GM12878 (cell line): ENCODE measurements at regions of chrX and their contacts with region 1.

Region 1: DNA sequence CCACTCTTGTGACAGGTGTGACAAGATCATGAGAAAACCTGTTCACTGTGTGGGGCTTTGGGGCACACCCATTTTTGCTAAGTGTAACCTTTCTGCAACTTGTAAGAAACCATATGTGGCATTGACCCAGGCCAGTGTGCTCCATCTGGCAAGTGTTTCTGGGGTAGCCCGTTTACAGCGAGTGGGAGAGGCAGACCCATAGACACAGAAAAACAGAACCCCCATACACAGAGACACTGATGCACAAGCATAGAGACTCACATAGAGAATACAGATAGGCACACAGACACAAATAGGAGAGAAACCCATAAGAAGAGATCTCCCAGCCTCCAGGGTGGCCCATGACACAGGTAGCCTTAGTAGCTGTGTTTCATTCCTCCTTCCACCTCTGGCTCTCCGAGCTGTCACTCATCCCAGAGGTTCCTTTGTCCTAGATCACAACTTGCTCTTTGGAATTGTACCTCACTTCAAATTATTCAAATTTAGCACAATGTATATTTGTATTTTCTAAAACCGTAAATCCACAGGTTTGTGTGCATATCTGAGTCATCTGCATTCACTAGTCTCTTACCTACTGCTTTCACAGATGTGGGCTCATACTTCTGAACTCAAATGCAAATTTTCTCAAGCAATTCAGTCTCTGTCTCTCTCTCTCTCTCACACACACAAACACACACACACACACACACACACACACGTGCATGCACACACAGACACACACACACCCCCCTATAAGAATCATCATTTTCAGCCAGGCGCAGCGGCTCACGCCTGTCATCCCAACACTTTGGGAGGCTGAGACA is 114.4 kb downstream of the SH3KBP1 start:
- DNase-seq: no peak
- ATAC-seq: peak; percentile 64
- H3K4me3 ChIP-seq: peak overlapping the region; percentile 2; the same call in 1 of the 2 replicates
- H3K27ac ChIP-seq: peak overlapping the region; percentile 90
- H3K4me1 ChIP-seq: peaks cover 61% of the 10 kb centered on the region
- H3K27me3 ChIP-seq: no peaks in the 10 kb centered on the region
- CTCF ChIP-seq: no peak
- EP300 ChIP-seq: peak in 1 of 2 experiments; percentile 24; a peak in 1 of 4 replicates
- POLR2A ChIP-seq: no peak
- RAD21 ChIP-seq: no peak

Region 2: GRCh38 chrX:19739683-19740082 is 33.3 kb before region 1 on chrX:
- CTCF ChIA-PET with region 1: interaction called, 12 read pairs
- POLR2A ChIA-PET with region 1: interaction called, 14 read pairs
- RAD21 ChIA-PET with region 1: interaction called, 80 read pairs
- SMC1A ChIA-PET with region 1: interaction called, 624 read pairs
- in situ Hi-C with region 1: no loop called
- intact Hi-C with region 1: no loop called
- DNase-seq: no peak
- ATAC-seq: peak; percentile 18; the same call in 2 of the 3 replicates
- H3K4me3 ChIP-seq: no peak overlapping the region
- H3K27ac ChIP-seq: no peak overlapping the region
- H3K4me1 ChIP-seq: peaks cover 28% of the 10 kb centered on the region
- H3K27me3 ChIP-seq: no peaks in the 10 kb centered on the region
- CTCF ChIP-seq: peak; percentile 56 to 72 (median 71)
- EP300 ChIP-seq: no peak
- POLR2A ChIP-seq: no peak
- RAD21 ChIP-seq: peak; percentile 73

Region 3: DNA sequence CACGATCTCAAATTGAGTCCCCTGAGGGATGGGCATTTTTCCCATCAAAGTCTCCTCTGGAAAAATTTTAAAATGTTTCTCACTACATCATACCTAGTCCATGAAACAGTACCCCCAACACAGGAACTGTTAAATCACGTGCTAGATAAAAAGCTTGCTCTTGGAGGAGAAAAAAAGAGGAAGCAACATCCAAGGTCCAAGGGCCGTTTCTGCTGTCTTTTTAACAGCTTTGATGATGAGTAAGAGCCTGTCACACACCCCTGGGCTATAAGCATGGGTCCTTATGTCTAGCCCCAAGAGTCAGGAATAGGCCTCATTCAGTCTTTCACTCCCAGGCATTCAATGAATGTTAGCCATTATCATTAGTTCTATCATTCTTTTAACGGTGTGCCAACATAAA is 14.5 kb before region 1 on chrX:
- CTCF ChIA-PET with region 1: interaction called, 9 read pairs
- POLR2A ChIA-PET with region 1: interaction called, 10 read pairs
- RAD21 ChIA-PET with region 1: interaction called, 45 read pairs
- SMC1A ChIA-PET with region 1: interaction called, 98 read pairs
- in situ Hi-C with region 1: no loop called
- intact Hi-C with region 1: no loop called
- DNase-seq: no peak
- ATAC-seq: peak; percentile 69
- H3K4me3 ChIP-seq: no peak overlapping the region
- H3K27ac ChIP-seq: peak overlapping the region; percentile 13; the same call in 1 of the 2 replicates
- H3K4me1 ChIP-seq: peaks cover 46% of the 10 kb centered on the region
- H3K27me3 ChIP-seq: no peaks in the 10 kb centered on the region
- CTCF ChIP-seq: no peak
- EP300 ChIP-seq: no peak
- POLR2A ChIP-seq: no peak
- RAD21 ChIP-seq: no peak

Region 4: DNA sequence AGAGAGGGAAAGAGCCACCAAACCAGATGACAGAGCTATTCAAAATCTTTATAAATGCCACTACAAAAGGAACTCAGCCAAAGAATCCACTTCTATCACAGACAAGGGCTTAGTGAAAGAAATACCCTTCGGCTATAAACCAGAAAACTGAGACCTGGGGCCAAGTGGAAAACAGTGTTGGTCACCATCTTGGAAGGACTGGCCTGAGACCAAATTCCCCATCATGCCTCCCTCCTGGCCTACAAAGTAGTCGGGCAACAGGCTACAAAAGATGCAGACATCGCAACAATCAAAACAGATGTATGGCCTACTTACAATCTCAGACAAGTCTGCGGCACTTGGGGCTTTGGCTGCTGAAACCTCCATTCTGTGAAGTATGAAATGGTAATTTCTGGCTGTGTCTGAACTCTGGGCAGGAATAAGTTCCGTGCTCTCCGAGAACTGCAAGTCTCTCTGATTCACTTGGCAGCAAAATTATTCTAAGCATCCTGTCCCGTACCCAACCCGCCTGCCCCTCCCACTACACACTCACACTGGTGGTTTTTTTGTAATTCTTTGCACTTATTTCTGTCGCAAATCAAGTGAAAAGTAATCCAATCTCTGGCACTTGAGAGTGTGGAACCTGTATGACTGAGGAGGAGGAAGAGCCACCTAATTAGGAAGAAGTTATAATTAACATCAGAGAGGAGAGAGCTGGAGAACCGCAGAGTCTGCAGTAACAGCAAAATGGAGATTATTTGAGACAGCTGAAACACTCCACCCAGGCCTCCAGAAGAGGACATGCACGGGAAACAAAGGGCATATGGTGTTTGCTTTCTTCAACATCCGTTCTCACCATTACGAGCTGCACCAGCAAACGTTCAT is 26.5 kb after region 1 on chrX:
- CTCF ChIA-PET with region 1: interaction called, 3 read pairs
- POLR2A ChIA-PET with region 1: interaction called, 6 read pairs
- RAD21 ChIA-PET with region 1: interaction called, 13 read pairs
- SMC1A ChIA-PET with region 1: interaction called, 83 read pairs
- in situ Hi-C with region 1: no loop called
- intact Hi-C with region 1: no loop called
- DNase-seq: no peak
- ATAC-seq: no peak
- H3K4me3 ChIP-seq: peak overlapping the region; percentile 8; the same call in 1 of the 2 replicates
- H3K27ac ChIP-seq: peak overlapping the region; percentile 73
- H3K4me1 ChIP-seq: peaks cover 19% of the 10 kb centered on the region
- H3K27me3 ChIP-seq: no peaks in the 10 kb centered on the region
- CTCF ChIP-seq: no peak
- EP300 ChIP-seq: no peak
- POLR2A ChIP-seq: no peak
- RAD21 ChIP-seq: no peak

Region 5: DNA sequence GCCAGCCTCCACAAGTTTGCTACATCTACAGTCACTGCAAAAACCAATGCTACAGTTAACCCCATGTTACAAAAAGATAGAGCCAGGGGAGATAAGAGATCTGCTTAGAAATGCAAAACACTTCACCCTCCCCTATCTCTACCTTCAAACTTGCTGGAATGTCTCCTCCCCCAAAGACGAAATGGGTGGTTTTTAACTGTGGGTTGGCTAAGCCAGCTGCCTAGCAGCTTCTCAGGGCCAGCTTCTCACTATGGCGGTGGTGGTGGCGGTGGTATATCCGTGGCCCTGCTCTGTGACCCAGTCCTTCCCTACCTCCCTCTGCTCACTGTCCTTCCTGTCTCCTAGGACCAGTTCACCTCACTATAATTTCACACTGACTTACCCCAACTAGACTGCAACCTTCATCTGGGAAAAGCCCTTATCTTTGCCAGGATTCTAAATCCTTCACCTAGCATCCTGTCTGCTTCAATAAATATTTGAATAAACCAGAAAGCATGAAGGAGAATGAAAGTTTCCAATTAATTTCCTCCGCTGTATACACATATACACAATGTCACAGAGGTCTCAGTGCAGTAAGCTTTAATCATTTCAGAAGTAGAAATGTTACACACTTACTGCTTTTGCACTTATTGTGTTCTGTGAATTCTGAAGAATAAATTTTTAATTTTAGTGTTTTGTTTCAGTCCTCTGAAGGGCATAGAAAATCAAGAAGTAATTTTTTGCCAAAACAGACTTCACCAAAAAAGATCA is 68.0 kb after region 1 on chrX:
- CTCF ChIA-PET with region 1: interaction called, 4 read pairs
- POLR2A ChIA-PET with region 1: interaction called, 3 read pairs
- RAD21 ChIA-PET with region 1: interaction called, 15 read pairs
- SMC1A ChIA-PET with region 1: interaction called, 20 read pairs
- in situ Hi-C with region 1: no loop called
- intact Hi-C with region 1: no loop called
- DNase-seq: peak; percentile 64
- ATAC-seq: peak; percentile 74
- H3K4me3 ChIP-seq: no peak overlapping the region
- H3K27ac ChIP-seq: peak overlapping the region; percentile 81
- H3K4me1 ChIP-seq: peaks cover 30% of the 10 kb centered on the region
- H3K27me3 ChIP-seq: no peaks in the 10 kb centered on the region
- CTCF ChIP-seq: no peak
- EP300 ChIP-seq: 0 out of 4 replicates have a peak, but pooled peaks of 1 of the 2 experiments have one; percentile 10
- POLR2A ChIP-seq: peak; percentile 66
- RAD21 ChIP-seq: no peak

Region 6: DNA sequence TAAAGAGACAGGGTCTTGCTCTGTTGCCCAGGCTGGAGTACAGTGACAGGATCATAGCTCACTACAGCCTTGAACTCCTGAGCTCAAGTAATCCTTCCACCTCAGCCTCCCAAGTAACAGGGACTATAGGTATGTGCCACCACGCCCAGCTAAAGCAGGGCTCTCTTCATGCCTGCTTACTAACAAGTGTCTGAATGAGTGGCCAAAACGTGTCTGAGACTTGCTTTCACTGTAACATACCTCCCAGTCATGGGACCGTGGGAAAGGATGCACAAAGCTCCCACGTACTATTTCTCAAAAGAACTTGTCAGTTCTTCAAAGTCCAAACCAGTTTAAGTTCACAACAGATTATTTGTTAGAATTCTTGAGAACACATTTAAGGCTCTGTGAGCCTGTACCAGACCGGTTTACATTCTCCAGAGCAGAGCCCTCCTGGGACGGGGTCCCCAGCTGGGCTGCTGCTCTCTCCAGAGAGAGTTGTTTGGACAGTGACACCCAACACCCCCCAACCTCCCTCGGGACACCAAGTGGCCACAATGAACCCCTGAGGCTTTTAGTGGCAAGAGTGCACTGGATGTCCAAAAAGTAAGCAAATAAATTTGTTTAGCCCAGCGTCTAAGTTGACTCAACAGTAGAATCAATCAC is 90.3 kb after region 1 on chrX:
- CTCF ChIA-PET with region 1: no interaction called
- POLR2A ChIA-PET with region 1: interaction called, 7 read pairs
- RAD21 ChIA-PET with region 1: interaction called, 39 read pairs
- SMC1A ChIA-PET with region 1: interaction called, 14 read pairs
- in situ Hi-C with region 1: no loop called
- intact Hi-C with region 1: loop called (anchors 1 kb)
- DNase-seq: peak; percentile 88
- ATAC-seq: peak; percentile 70
- H3K4me3 ChIP-seq: 0 out of 2 replicates have a peak overlapping the region, but pooled peaks have one; percentile 39
- H3K27ac ChIP-seq: peak overlapping the region; percentile 93
- H3K4me1 ChIP-seq: peaks cover 52% of the 10 kb centered on the region
- H3K27me3 ChIP-seq: no peaks in the 10 kb centered on the region
- CTCF ChIP-seq: no peak
- EP300 ChIP-seq: peak; percentile 35 to 69; a peak in 2 of 4 replicates
- POLR2A ChIP-seq: no peak
- RAD21 ChIP-seq: 0 out of 2 replicates have a peak, but pooled peaks have one; percentile 2